ENCODE measurements at regions of chr3 and their contacts with region 1.

Region 1: GRCh38 chr3:10352146-10352911 is 31.4 kb upstream of the SEC13 start:
- DNase-seq: no peak
- H3K4me3 ChIP-seq: no peak overlapping the region
- H3K27ac ChIP-seq: peak overlapping the region; percentile 8
- H3K4me1 ChIP-seq: peaks cover 69% of the 10 kb centered on the region
- CTCF ChIP-seq: no peak

Region 2: GRCh38 chr3:10370429-10370828 is 18.1 kb after region 1 on chr3:
- CTCF ChIA-PET with region 1: no interaction called
- POLR2A ChIA-PET with region 1: no interaction called
- intact Hi-C with region 1: no loop called
- DNase-seq: no peak
- H3K4me3 ChIP-seq: no peak overlapping the region
- H3K27ac ChIP-seq: no peak overlapping the region
- H3K4me1 ChIP-seq: peaks cover 26% of the 10 kb centered on the region
- CTCF ChIP-seq: no peak

Region 3: GRCh38 chr3:10459954-10460754 is 107.8 kb after region 1 on chr3:
- CTCF ChIA-PET with region 1: no interaction called
- POLR2A ChIA-PET with region 1: no interaction called
- intact Hi-C with region 1: loop called (anchors 5 kb)
- DNase-seq: peak; percentile 86
- H3K4me3 ChIP-seq: no peak overlapping the region
- H3K27ac ChIP-seq: no peak overlapping the region
- H3K4me1 ChIP-seq: peaks cover 33% of the 10 kb centered on the region
- CTCF ChIP-seq: no peak

Measured in OCI-LY7 (cell line).